Aorta (tissue), 5 donors: ENCODE measurements at regions of chrX and their contacts with region 1.

Region 1: DNA sequence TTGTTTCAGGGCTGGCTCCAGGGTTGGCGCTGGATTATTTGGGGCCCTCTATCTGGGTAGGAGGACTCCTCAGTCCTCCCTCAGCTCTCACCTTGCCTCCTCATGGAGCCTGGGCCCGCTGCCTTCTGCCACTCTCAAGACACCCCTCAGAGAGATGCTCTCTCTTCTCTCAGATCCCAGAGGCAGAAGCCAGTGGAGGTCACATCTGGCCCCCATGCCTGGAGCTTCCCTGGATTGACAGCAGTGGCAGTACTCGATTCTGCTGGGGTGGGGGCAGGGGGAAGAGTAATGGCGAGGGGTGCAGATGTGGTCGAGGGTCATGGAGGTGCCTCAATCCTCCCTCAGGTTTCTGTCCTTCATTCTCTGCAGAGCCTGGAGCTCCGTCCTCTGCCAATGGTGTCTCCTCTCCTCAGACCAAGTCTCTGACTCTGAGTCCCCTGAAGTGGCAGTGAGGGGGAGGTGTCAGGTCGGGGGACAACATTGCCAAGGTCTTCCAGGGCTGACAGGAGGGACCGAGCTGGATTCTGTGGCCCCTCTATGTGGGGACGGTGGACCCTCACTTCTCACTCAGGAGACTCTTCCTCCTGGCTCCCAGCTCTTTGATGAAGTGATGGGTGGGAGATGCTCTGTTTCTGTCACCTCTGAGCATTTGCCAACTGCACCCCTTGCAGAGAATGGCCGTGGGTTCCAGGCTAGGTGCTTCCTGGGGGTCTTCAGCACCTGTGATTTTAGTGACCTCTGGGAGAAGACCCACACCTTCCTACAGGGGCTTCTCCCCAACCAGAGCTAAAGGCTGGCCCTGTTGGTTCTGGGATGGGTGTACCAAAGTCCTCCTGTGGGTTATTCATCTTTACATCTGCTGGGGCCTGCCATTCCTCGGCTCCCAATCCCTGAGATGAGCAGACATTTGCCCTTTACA is 10.9 kb upstream of the HSFX1 start:
- DNase-seq: peak in 1 of 2 donors; percentile 26
- ATAC-seq: no peak
- H3K4me3 ChIP-seq: no peak overlapping the region
- H3K27ac ChIP-seq: no peak overlapping the region
- H3K4me1 ChIP-seq: no peaks in the 10 kb centered on the region
- H3K27me3 ChIP-seq: no peaks in the 10 kb centered on the region

Region 2: DNA sequence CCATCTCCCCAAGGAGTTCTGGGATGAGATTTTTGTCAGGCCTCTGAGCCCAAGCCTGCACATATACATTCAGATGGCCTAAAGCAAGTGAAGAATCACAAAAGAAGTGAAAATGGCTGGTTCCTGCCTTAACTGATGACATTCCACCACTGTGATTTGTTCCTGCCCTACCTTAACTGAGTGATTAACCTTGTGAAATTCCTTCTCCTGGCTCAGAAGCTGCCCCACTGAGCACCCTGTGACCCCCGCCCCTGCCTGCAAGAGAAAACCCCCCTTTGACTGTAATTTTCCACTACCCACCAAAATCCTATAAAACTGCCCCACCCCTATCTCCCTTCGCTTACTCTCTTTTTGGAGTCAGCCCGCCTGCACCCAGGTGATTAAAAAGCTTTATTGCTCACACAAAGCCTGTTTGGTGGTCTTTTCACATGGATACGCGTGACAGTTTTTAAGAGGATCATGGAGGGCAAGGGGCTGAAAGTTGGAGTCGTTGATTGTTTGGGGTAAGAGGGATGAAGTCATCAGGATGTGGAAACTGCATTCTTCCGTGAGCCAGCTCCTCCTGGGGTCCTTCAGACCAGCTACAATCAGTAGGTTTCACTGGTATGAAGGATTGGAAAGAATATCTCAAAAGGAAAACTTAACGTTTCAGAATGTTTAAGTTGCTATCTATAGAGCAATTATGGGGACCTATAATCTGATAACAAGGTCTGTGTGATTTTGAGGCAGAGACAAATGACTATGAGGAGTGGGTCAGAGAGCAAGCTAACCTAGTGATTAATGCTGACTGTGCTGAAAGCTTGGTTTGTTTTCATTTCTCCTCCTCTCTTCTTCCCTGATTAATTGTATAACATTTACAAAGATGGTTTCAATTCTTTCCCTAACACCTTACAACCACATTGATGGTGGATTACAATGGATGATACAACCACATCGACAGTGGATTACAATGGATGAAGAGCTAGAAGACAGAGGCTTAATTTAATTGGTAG is 79.7 kb before region 1 on chrX:
- intact Hi-C with region 1: loop called in 1 of 2 experiments (anchors 10 kb)
- DNase-seq: no peak
- ATAC-seq: no peak
- H3K4me3 ChIP-seq: no peak overlapping the region
- H3K27ac ChIP-seq: no peak overlapping the region
- H3K4me1 ChIP-seq: no peaks in the 10 kb centered on the region
- H3K27me3 ChIP-seq: no peaks in the 10 kb centered on the region